ENCODE measurements at regions of chr2 and their contacts with region 1.

Region 1: DNA sequence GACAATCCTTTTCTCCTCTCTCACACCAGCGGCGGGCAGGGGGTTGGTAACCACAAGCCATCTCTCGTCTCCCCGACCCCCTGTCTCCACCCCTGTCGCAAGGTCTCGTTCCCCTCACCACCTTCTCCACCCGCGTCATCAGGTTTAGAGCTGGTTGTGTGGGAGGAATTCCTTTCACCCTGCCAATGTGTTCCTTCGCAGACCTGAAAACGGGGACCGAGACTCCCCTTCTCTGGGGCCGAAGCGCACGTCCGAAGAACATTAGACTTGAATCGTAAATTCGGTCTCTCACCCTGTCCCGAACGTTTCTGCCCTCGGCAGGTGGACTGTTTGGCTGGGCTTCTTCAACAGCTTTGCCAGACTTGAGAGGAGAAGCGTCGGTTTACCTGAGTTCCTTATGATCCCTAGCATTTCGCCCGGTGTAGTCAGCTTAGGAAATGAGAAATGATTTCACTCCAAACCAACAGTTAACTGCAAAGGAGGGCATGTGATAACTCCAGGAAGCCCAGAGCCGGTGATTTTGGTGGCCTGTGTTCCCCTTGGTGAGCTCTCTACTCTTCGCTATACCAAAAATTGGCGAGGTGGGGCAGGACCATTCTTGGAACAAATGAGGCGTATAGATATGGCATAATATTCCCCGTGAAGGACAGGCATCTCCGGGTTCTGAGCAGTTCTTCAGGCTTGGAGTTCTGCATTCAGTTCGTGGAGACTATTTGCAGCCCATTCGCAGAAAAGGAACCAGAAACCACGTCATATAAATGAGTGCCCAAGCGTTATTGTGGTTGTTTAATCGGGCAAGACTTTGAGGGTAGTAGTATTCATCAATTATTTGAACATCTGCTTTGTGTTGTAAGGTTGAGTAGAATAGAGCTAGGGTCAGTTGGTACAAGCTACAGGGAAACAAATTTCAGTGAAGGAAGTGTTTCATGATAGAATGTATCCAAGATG is 694 bp downstream of the CFAP36 start:
- DNase-seq: peak; percentile 15
- H3K4me3 Mint-ChIP-seq: peak overlapping the region; percentile 97
- H3K27ac Mint-ChIP-seq: peak overlapping the region; percentile 95
- H3K4me1 Mint-ChIP-seq: peaks cover 17% of the 10 kb centered on the region
- H3K27me3 Mint-ChIP-seq: no peaks in the 10 kb centered on the region

Region 2: DNA sequence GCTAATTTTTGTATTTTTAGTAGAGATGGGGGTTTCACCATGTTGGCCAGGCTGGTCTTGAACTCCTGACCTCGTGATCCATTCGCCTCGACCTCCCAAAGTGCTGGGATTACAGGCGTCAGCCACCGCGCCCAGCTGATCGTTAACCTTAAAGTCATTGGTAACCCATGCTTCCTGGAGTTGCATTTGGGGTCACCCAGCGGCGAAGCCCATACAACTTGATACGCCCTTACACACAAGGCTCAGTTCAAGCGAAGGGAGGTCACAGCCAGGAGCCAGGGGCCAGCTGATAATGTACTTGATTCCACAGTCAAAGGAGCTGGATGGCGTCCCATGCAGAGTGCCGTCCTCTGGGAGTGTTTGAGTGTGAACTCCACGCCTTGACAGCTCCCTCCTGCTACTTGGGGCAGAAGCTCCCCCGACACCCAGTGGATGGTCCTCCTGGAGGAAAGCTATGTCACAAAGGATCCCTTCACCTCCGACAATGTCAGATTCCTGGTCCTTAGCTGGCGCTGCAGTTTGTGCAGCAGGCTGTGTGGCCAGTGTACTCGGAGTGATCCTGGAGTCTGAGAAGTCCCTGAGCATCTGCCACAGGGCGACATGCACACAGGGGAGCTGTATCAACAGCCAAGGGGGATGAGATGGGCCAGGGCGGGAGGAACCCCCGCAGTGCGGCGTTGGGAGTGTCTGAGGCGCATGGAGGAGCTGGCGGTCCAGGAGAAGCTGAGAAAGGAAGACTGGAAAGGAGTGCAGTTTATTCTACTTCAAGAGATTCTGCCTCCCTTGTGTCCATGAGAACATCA is 296.1 kb before region 1 on chr2:
- intact Hi-C with region 1: loop called (anchors 2 kb)
- DNase-seq: no peak
- H3K4me3 Mint-ChIP-seq: peak overlapping the region; percentile 71
- H3K27ac Mint-ChIP-seq: peak overlapping the region; percentile 67
- H3K4me1 Mint-ChIP-seq: peaks cover 46% of the 10 kb centered on the region
- H3K27me3 Mint-ChIP-seq: no peaks in the 10 kb centered on the region

Region 3: GRCh38 chr2:55268907-55269644 is 251.1 kb before region 1 on chr2 and contains the start of gene MTIF2:
- intact Hi-C with region 1: loop called (anchors 2 kb)
- DNase-seq: peak; percentile 87
- H3K4me3 Mint-ChIP-seq: peak within 1 kb of the TSS; percentile 93
- H3K27ac Mint-ChIP-seq: peak within 1 kb of the TSS; percentile 85
- H3K4me1 Mint-ChIP-seq: peaks cover 14% of the 10 kb centered on the region
- H3K27me3 Mint-ChIP-seq: no peaks in the 10 kb centered on the region
- total RNA-seq, gene MTIF2: 42.3 and 44.1 TPM in 2 replicates

Region 4: DNA sequence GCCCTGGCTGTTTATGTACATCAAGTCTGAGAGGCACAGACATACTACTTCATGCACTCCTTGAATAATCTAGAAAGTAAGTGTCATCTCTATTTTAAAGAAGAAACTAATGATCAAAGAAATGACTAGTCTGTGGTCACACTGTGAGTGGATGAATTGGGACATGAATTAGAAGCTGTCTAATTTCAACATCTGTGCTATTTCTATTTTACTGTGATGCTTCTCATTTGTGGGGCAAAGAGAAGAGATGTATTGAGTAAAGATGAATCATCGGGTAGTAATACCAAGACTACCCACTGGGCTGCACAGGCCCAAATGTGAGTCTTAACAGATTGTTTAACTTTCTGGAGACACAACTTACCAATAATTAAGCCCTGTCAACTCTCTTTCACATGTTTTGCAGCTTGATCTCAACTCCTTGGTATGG is 208.8 kb before region 1 on chr2:
- intact Hi-C with region 1: loop called (anchors 1 kb)
- DNase-seq: no peak
- H3K4me3 Mint-ChIP-seq: no peak overlapping the region
- H3K27ac Mint-ChIP-seq: peak overlapping the region; percentile 57
- H3K4me1 Mint-ChIP-seq: peaks cover 22% of the 10 kb centered on the region
- H3K27me3 Mint-ChIP-seq: no peaks in the 10 kb centered on the region

Region 5: GRCh38 chr2:55530539-55531081 is 10.4 kb after region 1 on chr2:
- intact Hi-C with region 1: loop called (anchors 1 kb)
- DNase-seq: no peak
- H3K4me3 Mint-ChIP-seq: peak overlapping the region; percentile 4
- H3K27ac Mint-ChIP-seq: peak overlapping the region; percentile 85
- H3K4me1 Mint-ChIP-seq: peaks cover 18% of the 10 kb centered on the region
- H3K27me3 Mint-ChIP-seq: no peaks in the 10 kb centered on the region

Region 6: GRCh38 chr2:55693181-55694134 is 173.2 kb after region 1 on chr2 and contains the start of gene PNPT1:
- intact Hi-C with region 1: loop called (anchors 1 kb)
- DNase-seq: peak; percentile 92
- H3K4me3 Mint-ChIP-seq: peak within 1 kb of the TSS; percentile 98
- H3K27ac Mint-ChIP-seq: peak within 1 kb of the TSS; percentile 89
- H3K4me1 Mint-ChIP-seq: peaks cover 39% of the 10 kb centered on the region
- H3K27me3 Mint-ChIP-seq: peaks cover 2% of the 10 kb centered on the region
- total RNA-seq, gene PNPT1: 65.1 and 71.1 TPM in 2 replicates